ENCODE measurements at regions of chr10 and their contacts with region 1.

Region 1: DNA sequence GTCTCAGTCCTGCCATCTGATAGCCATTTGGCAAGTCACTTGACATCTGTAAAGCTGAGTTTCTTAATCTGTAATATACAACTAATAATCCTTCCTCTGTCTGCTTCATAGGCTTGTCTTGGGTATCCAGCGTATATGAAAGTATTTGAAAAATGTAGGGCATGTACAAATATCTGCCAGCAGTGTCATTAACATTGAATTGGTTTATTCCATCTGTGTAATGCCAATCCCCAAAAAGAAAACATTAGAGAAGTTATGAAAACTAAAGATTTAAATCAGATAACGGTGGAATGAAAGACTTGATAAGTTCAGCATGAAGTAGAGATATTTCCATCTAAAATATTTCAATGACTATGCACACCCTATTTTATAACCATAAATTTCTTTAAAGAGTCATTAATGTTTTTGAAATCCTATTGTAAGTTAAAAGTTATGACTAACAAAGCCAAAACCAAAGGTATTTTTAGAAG is 9.8 kb upstream of the RTKN2 start:
- DNase-seq: no peak
- H3K4me3 Mint-ChIP-seq: no peak overlapping the region
- H3K27ac Mint-ChIP-seq: no peak overlapping the region
- H3K4me1 Mint-ChIP-seq: no peaks in the 10 kb centered on the region
- H3K27me3 Mint-ChIP-seq: peaks cover 11% of the 10 kb centered on the region

Region 2: DNA sequence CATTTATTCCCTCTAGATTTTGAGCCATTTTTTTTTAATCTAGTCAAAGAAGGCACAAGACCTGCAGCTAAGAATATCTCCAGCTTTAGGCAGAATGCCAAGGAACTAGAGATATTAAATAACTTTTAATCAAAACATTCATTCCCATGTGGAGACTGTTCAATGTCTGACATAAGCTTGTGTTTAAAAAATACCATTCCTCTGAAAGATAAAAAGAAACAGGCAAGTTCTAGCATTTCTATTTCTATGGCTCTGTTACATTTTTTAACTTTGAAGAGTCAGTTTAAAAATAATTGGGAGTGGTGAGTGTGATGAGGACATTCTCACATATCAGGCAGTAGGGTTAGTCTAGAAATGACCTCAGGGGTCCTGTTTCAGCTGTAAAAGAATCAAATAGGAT is 1382.4 kb before region 1 on chr10:
- intact Hi-C with region 1: loop called (anchors 10 kb)
- DNase-seq: no peak
- H3K4me3 Mint-ChIP-seq: no peak overlapping the region
- H3K27ac Mint-ChIP-seq: no peak overlapping the region
- H3K4me1 Mint-ChIP-seq: no peaks in the 10 kb centered on the region
- H3K27me3 Mint-ChIP-seq: peaks cover 14% of the 10 kb centered on the region

Region 3: DNA sequence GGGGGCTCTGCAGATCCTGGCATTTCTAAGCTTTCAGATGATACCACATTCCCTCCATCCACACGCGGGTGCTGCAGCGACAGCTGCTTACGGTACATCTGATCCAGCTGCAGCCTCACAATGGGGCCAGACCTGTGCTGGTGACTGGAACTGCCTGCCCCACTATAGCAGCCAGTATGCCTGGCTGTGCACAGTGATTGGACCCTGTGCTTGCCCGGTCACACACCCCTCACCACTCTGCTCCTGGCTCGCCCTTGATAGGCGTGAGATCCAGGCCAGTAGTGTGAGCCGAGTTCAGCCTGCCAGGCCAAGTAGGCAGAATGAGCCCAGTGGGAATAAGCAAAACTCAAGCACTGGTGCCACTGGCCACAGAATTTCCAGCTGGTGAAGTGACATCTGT is 1019.5 kb after region 1 on chr10:
- intact Hi-C with region 1: no loop called
- DNase-seq: no peak
- H3K4me3 Mint-ChIP-seq: no peak overlapping the region
- H3K27ac Mint-ChIP-seq: no peak overlapping the region
- H3K4me1 Mint-ChIP-seq: no peaks in the 10 kb centered on the region
- H3K27me3 Mint-ChIP-seq: no peaks in the 10 kb centered on the region

Measured in activated T-helper 1 cell treated with anti-CD3 and anti-CD28 coated beads, Interleukin-12 subunit alpha, Interleukin-12 subunit beta, Interleukin-2, Interleukin-4 antibody, amounts not matched to agents 30 ng/mL and 10 ng/mL and 1 ng/mL, durations not matched to agents 14 hours and 24 hours and 36 hours (primary cell).